Common myeloid progenitor, CD34-positive (primary cell): ENCODE measurements at regions of chr4 and their contacts with region 1.

Region 1: DNA sequence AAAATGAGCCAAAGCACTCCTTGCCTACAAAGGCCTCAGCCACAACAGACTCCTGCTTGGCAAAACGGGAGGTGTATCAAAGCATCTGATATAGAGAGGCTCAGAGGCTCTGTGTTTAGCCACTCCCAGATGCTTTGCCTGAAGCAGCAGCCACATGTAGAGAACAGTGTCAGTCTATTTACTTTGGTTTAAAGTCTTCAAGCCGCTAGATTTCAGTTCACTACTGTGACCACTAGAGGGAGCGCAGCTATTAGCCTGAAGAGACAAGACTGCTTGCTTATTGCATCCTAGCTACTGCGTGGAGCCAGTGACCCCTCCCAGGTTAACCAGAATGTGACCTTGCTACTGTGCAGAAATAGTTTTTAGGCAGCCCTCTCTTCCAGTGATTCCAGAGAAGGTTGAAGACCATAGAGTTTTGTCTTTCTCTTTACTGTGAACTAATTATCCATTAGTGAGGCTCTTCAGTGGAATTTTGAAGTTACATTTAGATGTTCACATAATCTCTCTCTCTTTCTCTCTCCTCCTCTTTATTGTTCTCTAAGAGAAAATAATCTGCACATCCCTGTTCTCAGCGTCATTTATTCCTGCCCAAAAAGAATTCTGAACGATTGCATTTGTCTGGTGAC is 39.3 kb downstream of the BMP3 start:
- DNase-seq: peak; percentile 88 to 93 (median 89)
- H3K4me3 ChIP-seq: no peak overlapping the region
- H3K27ac ChIP-seq: no peak overlapping the region
- H3K4me1 ChIP-seq: no peaks in the 10 kb centered on the region
- H3K27me3 ChIP-seq: no peaks in the 10 kb centered on the region

Region 2: DNA sequence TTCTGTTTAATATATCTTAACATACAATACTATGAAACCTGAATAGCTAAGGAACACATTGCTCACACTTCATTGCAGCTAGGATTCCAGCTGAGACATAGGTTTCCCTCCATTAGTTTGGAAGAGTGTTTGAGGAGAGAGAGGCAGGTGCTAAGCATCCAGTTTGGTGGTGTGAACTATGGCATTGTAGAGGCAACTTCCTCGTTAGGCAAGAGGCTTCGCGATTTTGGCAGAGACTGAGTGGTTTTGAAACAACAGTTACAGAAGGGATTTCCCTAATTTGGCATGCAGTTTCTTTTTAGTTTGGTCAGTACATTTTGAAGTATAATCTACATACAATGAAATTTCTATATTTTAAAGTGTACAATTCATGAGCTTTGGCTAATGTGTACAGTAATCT is 156.4 kb before region 1 on chr4:
- CTCF ChIA-PET with region 1: no interaction called
- POLR2A ChIA-PET with region 1: no interaction called
- DNase-seq: peak; percentile 2 to 63 (median 54)
- H3K4me3 ChIP-seq: no peak overlapping the region
- H3K27ac ChIP-seq: no peak overlapping the region
- H3K4me1 ChIP-seq: no peaks in the 10 kb centered on the region
- H3K27me3 ChIP-seq: no peaks in the 10 kb centered on the region

Region 3: GRCh38 chr4:81085291-81085690 is 15.5 kb after region 1 on chr4:
- CTCF ChIA-PET with region 1: interaction called, 11 read pairs
- POLR2A ChIA-PET with region 1: no interaction called
- DNase-seq: no peak
- H3K4me3 ChIP-seq: no peak overlapping the region
- H3K27ac ChIP-seq: no peak overlapping the region
- H3K4me1 ChIP-seq: no peaks in the 10 kb centered on the region
- H3K27me3 ChIP-seq: no peaks in the 10 kb centered on the region

Region 4: GRCh38 chr4:81136161-81136905 is 66.5 kb after region 1 on chr4:
- CTCF ChIA-PET with region 1: no interaction called
- POLR2A ChIA-PET with region 1: no interaction called
- DNase-seq: no peak
- H3K4me3 ChIP-seq: no peak overlapping the region
- H3K27ac ChIP-seq: no peak overlapping the region
- H3K4me1 ChIP-seq: no peaks in the 10 kb centered on the region
- H3K27me3 ChIP-seq: no peaks in the 10 kb centered on the region

Region 5: DNA sequence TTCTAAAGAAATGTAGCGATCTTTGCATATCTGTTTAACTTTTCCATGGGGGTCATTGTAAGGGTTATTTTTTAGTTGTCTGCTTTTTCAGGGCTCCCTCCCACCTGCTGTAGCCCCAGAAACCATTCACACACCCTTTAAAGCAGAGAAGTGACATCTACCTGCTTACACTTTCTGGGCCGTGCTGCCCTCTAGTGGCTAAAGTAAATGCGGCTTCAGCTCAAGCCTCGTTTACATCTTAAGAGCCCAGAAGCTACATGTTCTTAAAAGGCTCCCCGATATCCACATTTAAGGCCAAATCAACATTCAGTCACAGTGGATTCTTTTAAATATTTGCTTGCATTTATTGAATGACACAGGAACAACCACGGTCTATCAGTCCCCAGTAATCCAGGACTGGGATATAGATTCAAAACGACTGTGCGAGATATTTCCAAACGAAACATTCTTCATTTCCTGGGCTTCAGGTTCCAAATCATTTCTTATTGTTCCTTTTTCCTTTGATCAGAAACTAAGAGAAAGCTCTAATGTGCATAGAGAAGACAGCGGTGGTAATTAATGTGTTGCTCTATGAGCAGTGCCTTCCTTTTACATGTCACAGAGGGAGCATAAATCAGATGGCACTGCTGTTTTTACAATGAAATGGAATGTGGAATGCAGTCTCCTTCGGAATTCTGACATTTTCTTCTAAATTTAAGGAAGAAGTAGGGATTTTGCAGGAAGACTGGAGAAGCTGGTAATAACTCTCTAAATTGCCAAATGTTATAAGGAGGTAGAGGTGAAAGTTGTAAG is 282.0 kb after region 1 on chr4:
- CTCF ChIA-PET with region 1: interaction called, 84 read pairs
- POLR2A ChIA-PET with region 1: no interaction called
- DNase-seq: peak; percentile 88 to 91 (median 88)
- H3K4me3 ChIP-seq: peak overlapping the region in 2 of 7 experiments; percentile 40 to 48
- H3K27ac ChIP-seq: no peak overlapping the region
- H3K4me1 ChIP-seq: peaks cover 0 to 13% (median 6%) of the 10 kb centered on the region in 4 experiments
- H3K27me3 ChIP-seq: no peaks in the 10 kb centered on the region

Region 6: DNA sequence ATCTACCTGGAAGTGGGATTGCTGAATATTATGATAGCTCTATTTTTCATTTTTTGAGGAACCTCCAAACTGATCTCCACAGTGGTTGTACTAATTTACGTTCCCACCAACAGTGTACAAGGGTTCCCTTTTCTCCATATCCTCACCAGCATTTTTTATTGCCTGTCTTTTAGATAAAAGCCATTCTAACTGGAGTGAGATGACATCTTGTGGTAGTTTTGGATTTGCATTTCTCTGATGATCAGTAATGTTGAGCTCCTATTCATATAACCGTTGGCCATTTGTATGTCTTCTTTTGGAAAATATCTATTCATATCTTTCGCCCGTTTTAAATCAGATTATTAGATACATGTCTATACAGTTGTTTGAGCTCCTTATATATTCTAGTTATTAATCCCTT is 300.1 kb after region 1 on chr4:
- CTCF ChIA-PET with region 1: interaction called, 25 read pairs
- POLR2A ChIA-PET with region 1: no interaction called
- DNase-seq: peak in 2 of 3 donors; percentile 35 to 46
- H3K4me3 ChIP-seq: no peak overlapping the region
- H3K27ac ChIP-seq: no peak overlapping the region
- H3K4me1 ChIP-seq: no peaks in the 10 kb centered on the region
- H3K27me3 ChIP-seq: no peaks in the 10 kb centered on the region